ENCODE measurements at regions of chr18 and their contacts with region 1.

Region 1: GRCh38 chr18:10490401-10491165 is 35.2 kb upstream of the NAPG start:
- DNase-seq: peak; percentile 88
- ATAC-seq: peak; percentile 100
- H3K4me3 Mint-ChIP-seq: no peak overlapping the region
- H3K27ac Mint-ChIP-seq: peak overlapping the region; percentile 9
- H3K4me1 Mint-ChIP-seq: peaks cover 9% of the 10 kb centered on the region
- H3K27me3 Mint-ChIP-seq: no peaks in the 10 kb centered on the region
- CTCF ChIP-seq: peak; percentile 48

Region 2: GRCh38 chr18:10374636-10375293 is 115.8 kb before region 1 on chr18:
- CTCF ChIA-PET with region 1: no interaction called
- POLR2A ChIA-PET with region 1: no interaction called
- intact Hi-C with region 1: no loop called
- DNase-seq: no peak
- ATAC-seq: no peak
- H3K4me3 Mint-ChIP-seq: no peak overlapping the region
- H3K27ac Mint-ChIP-seq: no peak overlapping the region
- H3K4me1 Mint-ChIP-seq: no peaks in the 10 kb centered on the region
- H3K27me3 Mint-ChIP-seq: no peaks in the 10 kb centered on the region
- CTCF ChIP-seq: no peak

Region 3: DNA sequence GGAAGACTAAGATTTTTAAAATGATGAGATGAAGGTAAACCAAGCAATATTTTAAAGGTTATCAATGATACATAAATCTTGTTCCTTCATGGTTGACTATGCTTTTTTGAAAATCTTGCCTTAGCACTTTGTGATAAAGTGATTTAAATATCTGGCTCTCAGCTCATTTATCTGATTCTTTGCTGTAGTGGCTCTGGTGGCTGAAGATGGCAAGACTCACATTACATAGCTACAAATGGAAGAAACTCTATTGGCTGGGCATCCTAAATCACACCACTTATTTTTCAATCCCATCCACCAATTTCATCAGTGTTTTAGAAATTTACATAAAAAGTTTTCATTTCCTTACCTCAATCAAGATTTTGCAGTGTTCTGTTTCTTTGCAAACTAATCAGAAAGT is 52.7 kb before region 1 on chr18:
- CTCF ChIA-PET with region 1: interaction called, 4 read pairs
- POLR2A ChIA-PET with region 1: no interaction called
- intact Hi-C with region 1: loop called (anchors 5 kb)
- DNase-seq: peak; percentile 20
- ATAC-seq: no peak
- H3K4me3 Mint-ChIP-seq: no peak overlapping the region
- H3K27ac Mint-ChIP-seq: no peak overlapping the region
- H3K4me1 Mint-ChIP-seq: no peaks in the 10 kb centered on the region
- H3K27me3 Mint-ChIP-seq: no peaks in the 10 kb centered on the region
- CTCF ChIP-seq: peak; percentile 22

Measured in activated CD8-positive, alpha-beta T cell treated with anti-CD3 and anti-CD28 coated beads for 36 hours (primary cell).